ENCODE measurements at regions of chr11 and their contacts with region 1.

Region 1: GRCh38 chr11:127136438-127136837 is 135.9 kb upstream of the KIRREL3 start:
- DNase-seq: no peak
- ATAC-seq: no peak
- H3K4me3 ChIP-seq: no peak overlapping the region
- H3K27ac ChIP-seq: no peak overlapping the region
- H3K4me1 ChIP-seq: no peaks in the 10 kb centered on the region
- H3K27me3 ChIP-seq: no peaks in the 10 kb centered on the region
- CTCF ChIP-seq: 0 out of 2 replicates have a peak, but pooled peaks have one; percentile 14

Region 2: GRCh38 chr11:126113515-126113957 is 1022.9 kb before region 1 on chr11:
- CTCF ChIA-PET with region 1: no interaction called
- POLR2A ChIA-PET with region 1: no interaction called
- in situ Hi-C with region 1: no loop called
- intact Hi-C with region 1: no loop called
- DNase-seq: peak; percentile 51
- ATAC-seq: peak; percentile 78
- H3K4me3 ChIP-seq: no peak overlapping the region
- H3K27ac ChIP-seq: peak overlapping the region; percentile 57
- H3K4me1 ChIP-seq: peaks cover 41% of the 10 kb centered on the region
- H3K27me3 ChIP-seq: no peaks in the 10 kb centered on the region
- CTCF ChIP-seq: no peak

Region 3: GRCh38 chr11:126366065-126366785 is 770.2 kb before region 1 on chr11:
- CTCF ChIA-PET with region 1: no interaction called
- POLR2A ChIA-PET with region 1: interaction called, 10 read pairs
- in situ Hi-C with region 1: no loop called
- intact Hi-C with region 1: no loop called
- DNase-seq: no peak
- ATAC-seq: no peak
- H3K4me3 ChIP-seq: no peak overlapping the region
- H3K27ac ChIP-seq: no peak overlapping the region
- H3K4me1 ChIP-seq: peaks cover 21% of the 10 kb centered on the region
- H3K27me3 ChIP-seq: no peaks in the 10 kb centered on the region
- CTCF ChIP-seq: no peak

Region 4: DNA sequence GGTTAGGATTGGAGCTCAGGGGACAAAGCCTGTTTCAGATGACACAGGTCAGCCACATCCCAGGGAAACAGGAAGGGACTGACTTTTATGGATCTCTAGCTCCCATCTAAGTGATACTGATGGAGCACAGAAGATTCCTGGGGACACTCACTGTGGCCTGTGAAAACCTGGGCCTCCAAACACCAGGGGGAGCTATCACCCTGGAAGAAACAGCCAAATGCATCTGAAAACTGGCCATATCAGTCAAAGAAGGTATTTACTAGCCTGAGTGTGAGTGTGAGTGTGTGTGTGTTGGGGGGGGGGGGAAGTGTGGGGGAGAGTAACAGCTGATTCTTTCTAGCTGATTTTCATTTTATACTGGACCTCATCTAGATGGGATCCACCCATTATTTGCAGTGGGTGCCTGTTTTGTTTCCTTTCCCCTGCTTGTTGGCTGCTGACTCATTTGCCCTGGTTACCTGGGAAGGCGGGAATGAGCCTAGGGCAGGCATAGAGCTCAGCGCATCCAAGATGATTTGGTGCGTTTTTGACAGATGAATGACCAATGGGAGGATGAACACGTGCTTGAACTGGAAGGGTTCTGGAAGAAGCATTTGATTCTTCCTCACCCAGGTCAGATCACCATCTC is 419.9 kb before region 1 on chr11:
- CTCF ChIA-PET with region 1: no interaction called
- POLR2A ChIA-PET with region 1: no interaction called
- in situ Hi-C with region 1: no loop called
- intact Hi-C with region 1: no loop called
- DNase-seq: peak; percentile 18
- ATAC-seq: peak; percentile 56; the same call in 1 of the 2 replicates
- H3K4me3 ChIP-seq: no peak overlapping the region
- H3K27ac ChIP-seq: no peak overlapping the region
- H3K4me1 ChIP-seq: no peaks in the 10 kb centered on the region
- H3K27me3 ChIP-seq: peaks cover 14% of the 10 kb centered on the region
- CTCF ChIP-seq: peak; percentile 80

Region 5: DNA sequence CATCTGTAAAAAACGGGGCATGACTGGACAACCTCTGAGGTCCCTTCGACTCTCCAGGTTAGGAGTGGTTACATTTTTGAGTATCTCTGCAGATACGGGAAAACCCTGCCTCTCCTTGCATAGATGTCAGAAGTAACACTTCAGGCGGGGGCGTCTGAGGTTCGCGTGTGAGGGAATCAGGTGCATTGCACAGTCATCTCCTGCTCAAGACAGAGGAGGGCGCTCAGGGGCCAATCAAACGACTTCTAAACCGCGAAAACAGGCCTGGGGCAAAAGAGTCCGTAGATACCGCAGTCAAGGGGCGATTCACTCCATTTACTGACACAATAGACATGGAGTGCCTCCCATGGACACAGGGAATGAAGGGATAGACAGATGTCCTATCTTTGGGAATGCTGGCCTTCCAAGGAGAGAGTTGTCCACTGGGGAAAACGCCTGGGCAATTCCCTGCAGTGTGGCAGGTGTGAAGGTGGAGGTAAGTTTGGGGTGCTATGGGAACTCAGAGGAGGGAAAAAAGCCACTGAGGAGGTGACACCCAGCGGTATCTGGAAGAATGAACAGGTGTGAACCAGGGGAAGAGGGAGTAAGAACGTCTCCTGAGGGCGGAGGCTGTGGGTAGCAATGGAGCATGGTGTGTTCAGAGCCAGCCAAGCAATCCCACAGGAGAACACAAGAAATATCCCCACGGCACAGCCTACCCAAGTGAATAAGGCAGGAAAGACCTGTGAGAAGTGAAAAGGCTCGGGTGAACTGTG is 167.3 kb before region 1 on chr11:
- CTCF ChIA-PET with region 1: no interaction called
- POLR2A ChIA-PET with region 1: no interaction called
- in situ Hi-C with region 1: no loop called
- intact Hi-C with region 1: no loop called
- DNase-seq: no peak
- ATAC-seq: no peak
- H3K4me3 ChIP-seq: no peak overlapping the region
- H3K27ac ChIP-seq: no peak overlapping the region
- H3K4me1 ChIP-seq: no peaks in the 10 kb centered on the region
- H3K27me3 ChIP-seq: peaks cover 11% of the 10 kb centered on the region
- CTCF ChIP-seq: no peak

Measured in Panc1 (cell line).